ENCODE measurements at regions of chr1 and their contacts with region 1.

Region 1: DNA sequence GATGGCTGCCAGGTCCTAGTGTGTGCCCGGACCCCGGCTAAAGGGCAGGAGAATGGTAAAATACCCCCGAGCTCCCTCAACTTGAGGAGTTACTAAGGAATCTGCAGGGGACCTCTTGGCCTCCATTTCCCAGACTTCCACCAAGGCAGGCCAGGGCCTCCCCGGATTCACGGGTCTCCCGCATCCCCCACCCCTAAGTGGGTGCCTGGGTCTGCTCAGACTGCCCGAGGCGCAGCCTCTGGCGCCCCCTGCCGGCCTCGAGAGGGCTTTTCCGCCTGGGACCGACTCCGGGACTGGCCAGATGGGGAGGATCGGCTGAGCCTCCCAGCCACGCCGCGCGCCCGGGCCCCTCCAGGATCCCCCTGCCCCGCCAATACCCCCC is 1.7 kb downstream of the PLEKHG5 start:
- DNase-seq: peak in 1 of 2 experiments; percentile 93
- H3K4me3 ChIP-seq: peak overlapping the region; percentile 45 to 80 (median 68)
- H3K27ac ChIP-seq: no peak overlapping the region
- H3K4me1 ChIP-seq: peaks cover 0 to 23% (median 13%) of the 10 kb centered on the region in 4 experiments; a peak in 6 of 7 replicates
- H3K27me3 ChIP-seq: no peaks in the 10 kb centered on the region; a peak in 2 of 7 replicates
- CTCF ChIP-seq: peak in 2 of 3 experiments; percentile 84 to 90; a peak in 3 of 4 replicates
- EP300 ChIP-seq: no peak
- POLR2A ChIP-seq: no peak
- RAD21 ChIP-seq: peak; percentile 68 to 74

Region 2: GRCh38 chr1:6454856-6455751 is 34.7 kb before region 1 on chr1:
- CTCF ChIA-PET with region 1: interaction called, 168 read pairs
- POLR2A ChIA-PET with region 1: interaction called, 5 read pairs
- DNase-seq: no peak
- H3K4me3 ChIP-seq: peak overlapping the region in 1 of 4 experiments; percentile 44; a peak in 2 of 8 replicates
- H3K27ac ChIP-seq: no peak overlapping the region
- H3K4me1 ChIP-seq: peaks cover 0 to 20% (median 10%) of the 10 kb centered on the region in 4 experiments; a peak in 5 of 7 replicates
- H3K27me3 ChIP-seq: peaks cover 5 to 37% (median 21%) of the 10 kb centered on the region in 4 experiments; a peak in 6 of 7 replicates
- CTCF ChIP-seq: peak in 2 of 3 experiments; percentile 49 to 82; a peak in 3 of 4 replicates
- EP300 ChIP-seq: no peak
- POLR2A ChIP-seq: no peak
- RAD21 ChIP-seq: peak in 1 of 2 experiments; percentile 3; a peak in 1 of 4 replicates

Region 3: GRCh38 chr1:6464514-6464836 is 25.3 kb before region 1 on chr1:
- CTCF ChIA-PET with region 1: interaction called, 79 read pairs
- POLR2A ChIA-PET with region 1: interaction called, 4 read pairs
- DNase-seq: no peak
- H3K4me3 ChIP-seq: no peak overlapping the region
- H3K27ac ChIP-seq: no peak overlapping the region
- H3K4me1 ChIP-seq: peaks cover 0 to 20% (median 13%) of the 10 kb centered on the region in 4 experiments; a peak in 5 of 7 replicates
- H3K27me3 ChIP-seq: peaks cover 0 to 7% (median 4%) of the 10 kb centered on the region in 4 experiments; a peak in 3 of 7 replicates
- CTCF ChIP-seq: peak in 1 of 3 experiments; percentile 14; a peak in 1 of 4 replicates
- EP300 ChIP-seq: no peak
- POLR2A ChIP-seq: no peak
- RAD21 ChIP-seq: peak in 1 of 2 experiments; percentile 18; a peak in 1 of 4 replicates

Region 4: DNA sequence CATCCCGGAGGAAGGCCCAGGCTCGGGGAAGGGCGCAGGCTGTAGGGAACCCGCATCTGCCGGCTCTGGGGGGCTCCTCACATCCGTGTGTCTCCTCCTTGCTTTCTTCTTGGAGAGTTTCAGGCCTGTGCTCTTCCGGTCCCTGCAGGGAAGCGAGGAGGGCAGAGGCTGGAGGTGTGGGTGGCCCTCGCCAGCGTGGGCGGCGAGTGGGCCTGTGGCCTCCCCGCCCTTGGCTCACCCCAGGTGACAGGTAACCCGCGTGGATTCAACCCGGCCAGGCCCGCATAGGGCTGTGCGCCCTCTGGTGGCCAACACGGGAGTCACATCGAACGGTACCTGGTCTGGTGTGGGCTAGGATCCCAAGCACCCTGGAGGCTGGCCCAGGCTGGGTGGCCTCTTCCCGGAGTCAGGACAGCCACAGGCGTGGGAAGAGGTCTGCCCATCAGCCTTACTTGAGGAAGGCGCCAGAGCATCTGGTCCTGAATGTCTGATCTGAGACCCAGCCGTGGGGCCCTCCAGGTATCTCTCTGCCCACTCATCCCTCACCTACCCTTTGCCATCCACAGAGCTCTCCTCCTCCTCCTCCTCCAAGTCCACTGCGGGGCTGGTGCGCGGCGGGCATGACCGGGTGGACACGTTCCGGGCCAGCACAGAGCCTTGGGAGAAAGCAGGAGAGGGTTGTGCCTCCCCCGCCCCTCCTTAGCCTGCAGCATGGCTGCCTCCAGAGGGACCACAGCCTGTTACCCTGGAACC is 14.2 kb before region 1 on chr1:
- CTCF ChIA-PET with region 1: interaction called, 87 read pairs
- POLR2A ChIA-PET with region 1: interaction called, 4 read pairs
- DNase-seq: peak in 1 of 2 experiments; percentile 91
- H3K4me3 ChIP-seq: no peak overlapping the region
- H3K27ac ChIP-seq: no peak overlapping the region
- H3K4me1 ChIP-seq: peaks cover 0 to 22% (median 14%) of the 10 kb centered on the region in 4 experiments; a peak in 6 of 7 replicates
- H3K27me3 ChIP-seq: no peaks in the 10 kb centered on the region; a peak in 1 of 7 replicates
- CTCF ChIP-seq: peak in 2 of 3 experiments; percentile 81 to 92; a peak in 3 of 4 replicates
- EP300 ChIP-seq: no peak
- POLR2A ChIP-seq: no peak
- RAD21 ChIP-seq: peak; percentile 30 to 54; a peak in 3 of 4 replicates

Region 5: DNA sequence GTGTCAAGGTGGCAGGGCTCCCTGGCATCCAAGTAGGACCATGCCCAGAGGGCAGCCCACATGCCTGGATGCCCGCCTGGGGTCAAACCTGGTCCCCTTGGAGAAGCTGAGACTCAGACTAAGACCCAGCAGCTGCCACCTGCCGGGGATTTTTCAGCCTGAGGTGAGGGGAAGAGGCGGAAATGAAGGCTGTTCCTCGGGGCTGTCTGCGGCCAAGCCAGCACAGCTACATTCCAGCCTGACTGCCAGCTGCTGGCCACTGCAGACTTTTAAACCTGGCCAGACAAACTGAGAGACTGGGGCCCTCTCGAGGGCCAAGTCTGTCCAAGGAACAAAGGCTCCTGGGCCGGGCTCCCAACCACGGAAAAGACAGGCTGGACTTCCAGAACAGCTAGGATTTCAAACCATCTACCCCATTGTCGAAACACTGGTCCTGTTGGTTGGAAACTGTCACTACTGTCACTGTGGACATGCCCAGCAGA is 23.6 kb after region 1 on chr1:
- CTCF ChIA-PET with region 1: interaction called, 17 read pairs
- POLR2A ChIA-PET with region 1: interaction called, 4 read pairs
- DNase-seq: no peak
- H3K4me3 ChIP-seq: no peak overlapping the region
- H3K27ac ChIP-seq: no peak overlapping the region
- H3K4me1 ChIP-seq: no peaks in the 10 kb centered on the region; a peak in 3 of 7 replicates
- H3K27me3 ChIP-seq: no peaks in the 10 kb centered on the region
- CTCF ChIP-seq: no peak
- EP300 ChIP-seq: no peak
- POLR2A ChIP-seq: no peak
- RAD21 ChIP-seq: no peak